K562 (cell line): ENCODE measurements at regions of chr21 and their contacts with region 1.

Region 1: GRCh38 chr21:32770871-32771523 is 558 bp downstream of the PAXBP1 start:
- DNase-seq: peak; percentile 65 to 84 (median 80)
- ATAC-seq: peak; percentile 62
- H3K4me3 ChIP-seq: peak overlapping the region; percentile 90
- H3K27ac ChIP-seq: peak overlapping the region; percentile 90
- H3K4me1 ChIP-seq: peaks cover 10 to 11% of the 10 kb centered on the region in 2 experiments
- H3K27me3 ChIP-seq: no peaks in the 10 kb centered on the region
- CTCF ChIP-seq: 0 out of 6 replicates have a peak, but pooled peaks of 1 of the 3 experiments have one; percentile 1
- EP300 ChIP-seq: no peak
- POLR2A ChIP-seq: no peak
- RAD21 ChIP-seq: no peak

Region 2: GRCh38 chr21:32612075-32612998 is 158.7 kb before region 1 on chr21 and contains the start of gene CFAP298:
- CTCF ChIA-PET with region 1: no interaction called
- POLR2A ChIA-PET with region 1: no interaction called
- in situ Hi-C with region 1: no loop called
- intact Hi-C with region 1: loop called (anchors 5 kb)
- DNase-seq: peak; percentile 88 to 96 (median 90)
- ATAC-seq: peak; percentile 90
- H3K4me3 ChIP-seq: peak within 1 kb of the TSS; percentile 89
- H3K27ac ChIP-seq: peak within 1 kb of the TSS; percentile 96
- H3K4me1 ChIP-seq: peaks cover 0 to 21% of the 10 kb centered on the region in 2 experiments; a peak in 4 of 5 replicates
- H3K27me3 ChIP-seq: no peaks in the 10 kb centered on the region
- CTCF ChIP-seq: no peak
- EP300 ChIP-seq: peak; percentile 32
- POLR2A ChIP-seq: peak; percentile 91
- RAD21 ChIP-seq: no peak
- polyA plus RNA-seq, gene CFAP298: 31.4 to 43.5 TPM

Region 3: GRCh38 chr21:32727687-32728455 is 43.1 kb before region 1 on chr21 and contains the start of gene SYNJ1:
- CTCF ChIA-PET with region 1: no interaction called
- POLR2A ChIA-PET with region 1: interaction called, 5 read pairs
- in situ Hi-C with region 1: no loop called
- intact Hi-C with region 1: loop called (anchors 5 kb)
- DNase-seq: peak; percentile 97 to 99 (median 98)
- ATAC-seq: peak; percentile 96
- H3K4me3 ChIP-seq: peak within 1 kb of the TSS; percentile 85
- H3K27ac ChIP-seq: peak within 1 kb of the TSS; percentile 72
- H3K4me1 ChIP-seq: peaks cover 0 to 21% of the 10 kb centered on the region in 2 experiments; a peak in 2 of 5 replicates
- H3K27me3 ChIP-seq: no peaks in the 10 kb centered on the region
- CTCF ChIP-seq: no peak
- EP300 ChIP-seq: no peak; the same call in 1 of the 2 replicates
- POLR2A ChIP-seq: peak; percentile 87
- RAD21 ChIP-seq: no peak
- polyA plus RNA-seq, gene SYNJ1: 2.4 to 2.6 TPM

Region 4: GRCh38 chr21:32747396-32747795 is 23.6 kb before region 1 on chr21:
- CTCF ChIA-PET with region 1: no interaction called
- POLR2A ChIA-PET with region 1: interaction called, 11 read pairs
- in situ Hi-C with region 1: no loop called
- intact Hi-C with region 1: no loop called
- DNase-seq: no peak
- ATAC-seq: no peak
- H3K4me3 ChIP-seq: no peak overlapping the region
- H3K27ac ChIP-seq: no peak overlapping the region
- H3K4me1 ChIP-seq: no peaks in the 10 kb centered on the region
- H3K27me3 ChIP-seq: no peaks in the 10 kb centered on the region
- CTCF ChIP-seq: no peak
- EP300 ChIP-seq: no peak
- POLR2A ChIP-seq: no peak
- RAD21 ChIP-seq: no peak

Region 5: DNA sequence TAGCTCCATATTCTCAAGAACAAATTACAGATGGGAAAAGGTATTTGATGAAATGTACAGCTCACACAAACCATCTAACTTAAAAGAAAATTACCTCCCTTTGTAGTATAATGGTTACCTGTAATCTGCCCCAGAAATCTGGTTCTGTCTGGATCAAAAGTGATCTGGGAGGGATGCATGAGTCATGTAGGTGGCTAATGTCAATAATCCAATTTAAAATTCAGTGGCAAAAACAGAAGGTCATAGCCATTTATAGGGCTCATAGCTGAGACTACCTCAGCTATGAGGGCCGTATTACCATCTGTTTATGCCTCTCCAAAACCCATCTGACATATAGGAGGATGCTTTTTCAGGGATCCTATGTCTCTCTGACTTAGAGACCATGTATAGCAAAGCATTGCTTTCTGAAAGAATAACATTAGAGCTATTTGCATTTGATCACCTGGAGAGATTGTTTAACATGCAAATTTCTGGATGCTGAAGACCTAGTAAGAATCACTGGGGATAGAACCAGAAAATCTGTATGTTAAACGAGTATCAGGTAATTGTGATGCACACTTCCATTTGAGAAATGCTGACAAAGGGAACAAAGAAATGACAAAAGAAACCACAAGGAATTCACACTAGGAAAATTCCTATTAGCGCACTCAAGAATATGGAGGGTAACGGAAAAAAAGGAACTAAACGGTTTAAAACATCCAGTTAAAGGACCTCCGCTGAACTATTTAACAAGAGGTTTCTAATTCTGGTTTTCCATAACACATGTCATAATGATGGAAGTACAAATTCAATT is 17.0 kb before region 1 on chr21:
- CTCF ChIA-PET with region 1: no interaction called
- POLR2A ChIA-PET with region 1: interaction called, 29 read pairs
- in situ Hi-C with region 1: no loop called
- intact Hi-C with region 1: no loop called
- DNase-seq: no peak
- ATAC-seq: no peak
- H3K4me3 ChIP-seq: no peak overlapping the region
- H3K27ac ChIP-seq: no peak overlapping the region
- H3K4me1 ChIP-seq: peaks cover 0 to 5% of the 10 kb centered on the region in 2 experiments; a peak in 2 of 5 replicates
- H3K27me3 ChIP-seq: no peaks in the 10 kb centered on the region
- CTCF ChIP-seq: no peak
- EP300 ChIP-seq: no peak
- POLR2A ChIP-seq: no peak
- RAD21 ChIP-seq: no peak

Region 6: GRCh38 chr21:32826329-32827167 is 55.6 kb after region 1 on chr21:
- CTCF ChIA-PET with region 1: no interaction called
- POLR2A ChIA-PET with region 1: no interaction called
- in situ Hi-C with region 1: no loop called
- intact Hi-C with region 1: loop called (anchors 5 kb)
- DNase-seq: peak; percentile 36 to 73 (median 52)
- ATAC-seq: peak; percentile 100
- H3K4me3 ChIP-seq: no peak overlapping the region
- H3K27ac ChIP-seq: no peak overlapping the region
- H3K4me1 ChIP-seq: no peaks in the 10 kb centered on the region
- H3K27me3 ChIP-seq: peaks cover 4 to 9% of the 10 kb centered on the region in 2 experiments; a peak in 4 of 5 replicates
- CTCF ChIP-seq: peak; percentile 71 to 88 (median 72)
- EP300 ChIP-seq: no peak
- POLR2A ChIP-seq: no peak
- RAD21 ChIP-seq: peak; percentile 75 to 95